Sigmoid colon (tissue), 7 donors: ENCODE measurements at regions of chr21 and their contacts with region 1.

Region 1: GRCh38 chr21:39349211-39350093 is 564 bp upstream of the HMGN1 start:
- DNase-seq: peak; percentile 96
- H3K4me3 ChIP-seq: peak overlapping the region; percentile 58 to 75 (median 70)
- H3K27ac ChIP-seq: peak overlapping the region; percentile 91 to 97 (median 94)
- H3K4me1 ChIP-seq: peaks cover 0 to 35% (median 18%) of the 10 kb centered on the region in 4 donors
- H3K27me3 ChIP-seq: no peaks in the 10 kb centered on the region
- CTCF ChIP-seq: no peak
- EP300 ChIP-seq: no peak
- POLR2A ChIP-seq: peak in 1 of 2 donors; percentile 40

Region 2: GRCh38 chr21:38861989-38862683 is 487.3 kb before region 1 on chr21:
- intact Hi-C with region 1: no loop called
- DNase-seq: no peak
- H3K4me3 ChIP-seq: no peak overlapping the region
- H3K27ac ChIP-seq: no peak overlapping the region
- H3K4me1 ChIP-seq: no peaks in the 10 kb centered on the region
- H3K27me3 ChIP-seq: no peaks in the 10 kb centered on the region
- CTCF ChIP-seq: no peak
- EP300 ChIP-seq: no peak
- POLR2A ChIP-seq: no peak

Region 3: DNA sequence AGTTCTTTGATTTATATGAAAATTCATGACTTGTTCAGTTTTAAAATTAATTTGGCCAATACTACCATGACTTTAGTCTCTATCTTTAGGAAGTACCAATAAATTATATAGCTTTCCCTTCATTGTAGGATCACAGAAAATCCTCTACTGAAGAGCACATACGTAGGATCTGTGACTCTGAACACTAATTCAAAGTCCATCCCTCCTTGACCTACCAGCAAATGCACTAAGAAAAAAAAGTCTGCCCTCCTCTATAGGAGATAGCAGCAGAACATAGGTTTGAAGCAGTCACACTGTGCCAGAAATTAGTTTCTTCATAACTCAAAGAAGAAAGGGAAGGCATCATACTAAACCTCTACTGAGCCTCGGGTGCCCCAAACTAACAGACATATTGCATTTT is 52.6 kb before region 1 on chr21:
- intact Hi-C with region 1: no loop called
- DNase-seq: no peak
- H3K4me3 ChIP-seq: no peak overlapping the region
- H3K27ac ChIP-seq: no peak overlapping the region
- H3K4me1 ChIP-seq: peaks cover 0 to 17% (median 5%) of the 10 kb centered on the region in 4 donors
- H3K27me3 ChIP-seq: no peaks in the 10 kb centered on the region
- CTCF ChIP-seq: no peak
- EP300 ChIP-seq: no peak
- POLR2A ChIP-seq: no peak

Region 4: GRCh38 chr21:39313571-39314142 is 35.8 kb before region 1 on chr21 and contains the start of gene BRWD1:
- intact Hi-C with region 1: loop called (anchors 1 kb)
- DNase-seq: peak; percentile 93
- H3K4me3 ChIP-seq: peak within 1 kb of the TSS; percentile 73 to 97 (median 82)
- H3K27ac ChIP-seq: peak within 1 kb of the TSS; percentile 96 to 99 (median 96)
- H3K4me1 ChIP-seq: peaks cover 0 to 35% (median 26%) of the 10 kb centered on the region in 4 donors
- H3K27me3 ChIP-seq: no peaks in the 10 kb centered on the region
- CTCF ChIP-seq: peak in 2 of 4 experiments; percentile 33 to 43
- EP300 ChIP-seq: peak in 1 of 4 donors; percentile 81
- POLR2A ChIP-seq: peak; percentile 57 to 68
- total RNA-seq, gene BRWD1: 53.5 to 92.5 (median 70.4) TPM

Region 5: GRCh38 chr21:39379986-39380891 is 30.8 kb after region 1 on chr21:
- intact Hi-C with region 1: loop called (anchors 2 kb)
- DNase-seq: peak; percentile 98
- H3K4me3 ChIP-seq: peak overlapping the region; percentile 71 to 92 (median 80)
- H3K27ac ChIP-seq: peak overlapping the region; percentile 90 to 98 (median 94)
- H3K4me1 ChIP-seq: peaks cover 0 to 31% (median 14%) of the 10 kb centered on the region in 4 donors
- H3K27me3 ChIP-seq: no peaks in the 10 kb centered on the region
- CTCF ChIP-seq: no peak
- EP300 ChIP-seq: peak in 1 of 4 donors; percentile 50
- POLR2A ChIP-seq: peak; percentile 54 to 82

Region 6: GRCh38 chr21:39388038-39388810 is 38.8 kb after region 1 on chr21:
- intact Hi-C with region 1: loop called (anchors 2 kb)
- DNase-seq: peak; percentile 94
- H3K4me3 ChIP-seq: peak overlapping the region; percentile 16 to 51 (median 44)
- H3K27ac ChIP-seq: peak overlapping the region; percentile 72 to 84 (median 80)
- H3K4me1 ChIP-seq: peaks cover 0 to 42% (median 26%) of the 10 kb centered on the region in 4 donors
- H3K27me3 ChIP-seq: no peaks in the 10 kb centered on the region
- CTCF ChIP-seq: peak; percentile 74 to 97 (median 90)
- EP300 ChIP-seq: no peak
- POLR2A ChIP-seq: no peak